ENCODE measurements at regions of chrX and their contacts with region 1.

Region 1: DNA sequence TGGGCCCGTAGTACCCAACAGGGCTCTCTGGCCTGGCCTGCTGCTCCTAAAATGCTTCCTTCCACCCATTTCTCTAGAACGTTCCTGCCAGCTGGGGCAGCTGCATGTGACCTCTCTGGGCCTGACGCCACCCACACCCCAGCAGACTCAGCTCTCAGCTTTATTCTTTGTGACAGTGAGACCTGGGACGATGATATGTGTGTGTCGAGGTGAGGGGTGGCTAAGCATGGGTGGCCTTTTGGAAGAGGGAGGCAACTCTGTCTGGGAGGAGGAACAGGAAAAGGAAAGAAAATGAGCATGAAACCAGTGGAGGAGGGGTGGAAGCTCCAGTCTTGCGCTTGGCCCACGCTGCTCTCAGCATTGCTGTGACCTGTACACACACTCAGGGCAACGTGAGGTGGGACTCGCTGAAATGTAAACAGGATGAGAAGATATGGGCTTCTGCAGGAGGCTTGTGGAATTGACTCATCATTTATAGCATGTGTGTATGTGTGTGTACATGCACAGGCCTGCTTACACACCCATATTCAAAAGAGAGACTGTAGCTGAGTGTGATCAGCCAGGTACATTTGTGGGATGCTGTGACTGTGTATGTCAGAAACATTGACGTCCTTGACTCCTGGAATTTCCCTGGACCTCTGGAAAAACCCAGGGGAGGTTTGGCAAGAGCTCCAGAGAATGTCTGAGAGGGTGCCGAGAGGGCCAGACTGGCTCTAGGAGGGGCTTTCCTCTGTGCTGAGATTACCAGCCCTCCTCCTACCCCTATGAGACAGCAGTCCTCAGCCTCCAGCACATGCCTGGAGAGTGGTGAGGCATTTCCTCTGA is 137.9 kb downstream of the PJA1 start:
- DNase-seq: peak; percentile 91
- ATAC-seq: peak; percentile 58
- H3K4me3 ChIP-seq: no peak overlapping the region; the same call in 1 of the 2 replicates
- H3K27ac ChIP-seq: peak overlapping the region; percentile 98
- H3K4me1 ChIP-seq: peaks cover 64% of the 10 kb centered on the region
- H3K27me3 ChIP-seq: no peaks in the 10 kb centered on the region
- CTCF ChIP-seq: no peak

Region 2: GRCh38 chrX:68828740-68829552 is 198.4 kb before region 1 on chrX and contains the start of gene EFNB1:
- CTCF ChIA-PET with region 1: interaction called, 18 read pairs
- POLR2A ChIA-PET with region 1: interaction called, 62 read pairs
- intact Hi-C with region 1: loop called (anchors 1 kb)
- DNase-seq: peak; percentile 96
- ATAC-seq: peak; percentile 65
- H3K4me3 ChIP-seq: peak within 1 kb of the TSS; percentile 93
- H3K27ac ChIP-seq: peak within 1 kb of the TSS; percentile 87
- H3K4me1 ChIP-seq: peaks cover 32% of the 10 kb centered on the region
- H3K27me3 ChIP-seq: no peaks in the 10 kb centered on the region
- CTCF ChIP-seq: no peak
- total RNA-seq, gene EFNB1: 102 and 142 TPM in 2 replicates

Region 3: DNA sequence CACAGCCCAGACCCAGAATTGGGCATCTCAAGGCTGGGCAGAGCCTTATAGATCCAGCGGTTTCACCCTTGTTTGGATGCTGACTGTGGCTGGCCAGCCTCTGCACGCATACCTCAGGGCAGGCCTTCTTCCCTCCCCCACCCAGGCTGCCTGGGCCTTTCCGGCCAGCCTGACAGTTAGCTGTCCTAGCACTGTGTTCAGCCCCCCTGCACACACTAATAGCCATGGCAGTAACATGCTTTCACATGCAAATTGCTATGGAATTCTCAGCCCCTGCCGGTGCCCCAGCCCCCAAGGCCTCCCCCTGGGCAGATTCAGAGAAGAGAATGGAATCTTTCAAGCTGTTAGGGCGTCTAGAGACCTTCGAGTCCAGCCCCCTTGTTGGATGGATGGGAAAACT is 180.9 kb before region 1 on chrX:
- CTCF ChIA-PET with region 1: no interaction called
- POLR2A ChIA-PET with region 1: no interaction called
- intact Hi-C with region 1: loop called (anchors 5 kb)
- DNase-seq: no peak
- ATAC-seq: no peak
- H3K4me3 ChIP-seq: no peak overlapping the region
- H3K27ac ChIP-seq: no peak overlapping the region
- H3K4me1 ChIP-seq: peaks cover 15% of the 10 kb centered on the region; the same call in 1 of the 2 replicates
- H3K27me3 ChIP-seq: no peaks in the 10 kb centered on the region
- CTCF ChIP-seq: no peak

Region 4: GRCh38 chrX:68929332-68930150 is 97.9 kb before region 1 on chrX:
- CTCF ChIA-PET with region 1: no interaction called
- POLR2A ChIA-PET with region 1: no interaction called
- intact Hi-C with region 1: loop called (anchors 5 kb)
- DNase-seq: peak; percentile 89
- ATAC-seq: peak; percentile 92
- H3K4me3 ChIP-seq: no peak overlapping the region
- H3K27ac ChIP-seq: peak overlapping the region; percentile 55
- H3K4me1 ChIP-seq: peaks cover 27% of the 10 kb centered on the region
- H3K27me3 ChIP-seq: no peaks in the 10 kb centered on the region
- CTCF ChIP-seq: no peak

Region 5: GRCh38 chrX:68999356-68999755 is 28.0 kb before region 1 on chrX:
- CTCF ChIA-PET with region 1: no interaction called
- POLR2A ChIA-PET with region 1: no interaction called
- intact Hi-C with region 1: loop called (anchors 1 kb)
- DNase-seq: peak; percentile 92
- ATAC-seq: peak; percentile 96
- H3K4me3 ChIP-seq: no peak overlapping the region
- H3K27ac ChIP-seq: peak overlapping the region; percentile 93
- H3K4me1 ChIP-seq: peaks cover 34% of the 10 kb centered on the region
- H3K27me3 ChIP-seq: no peaks in the 10 kb centered on the region
- CTCF ChIP-seq: no peak

Region 6: GRCh38 chrX:69045616-69046345 is 18.4 kb after region 1 on chrX:
- CTCF ChIA-PET with region 1: no interaction called
- POLR2A ChIA-PET with region 1: no interaction called
- intact Hi-C with region 1: no loop called
- DNase-seq: no peak
- ATAC-seq: no peak
- H3K4me3 ChIP-seq: no peak overlapping the region
- H3K27ac ChIP-seq: no peak overlapping the region
- H3K4me1 ChIP-seq: no peaks in the 10 kb centered on the region
- H3K27me3 ChIP-seq: no peaks in the 10 kb centered on the region
- CTCF ChIP-seq: no peak

Region 7: DNA sequence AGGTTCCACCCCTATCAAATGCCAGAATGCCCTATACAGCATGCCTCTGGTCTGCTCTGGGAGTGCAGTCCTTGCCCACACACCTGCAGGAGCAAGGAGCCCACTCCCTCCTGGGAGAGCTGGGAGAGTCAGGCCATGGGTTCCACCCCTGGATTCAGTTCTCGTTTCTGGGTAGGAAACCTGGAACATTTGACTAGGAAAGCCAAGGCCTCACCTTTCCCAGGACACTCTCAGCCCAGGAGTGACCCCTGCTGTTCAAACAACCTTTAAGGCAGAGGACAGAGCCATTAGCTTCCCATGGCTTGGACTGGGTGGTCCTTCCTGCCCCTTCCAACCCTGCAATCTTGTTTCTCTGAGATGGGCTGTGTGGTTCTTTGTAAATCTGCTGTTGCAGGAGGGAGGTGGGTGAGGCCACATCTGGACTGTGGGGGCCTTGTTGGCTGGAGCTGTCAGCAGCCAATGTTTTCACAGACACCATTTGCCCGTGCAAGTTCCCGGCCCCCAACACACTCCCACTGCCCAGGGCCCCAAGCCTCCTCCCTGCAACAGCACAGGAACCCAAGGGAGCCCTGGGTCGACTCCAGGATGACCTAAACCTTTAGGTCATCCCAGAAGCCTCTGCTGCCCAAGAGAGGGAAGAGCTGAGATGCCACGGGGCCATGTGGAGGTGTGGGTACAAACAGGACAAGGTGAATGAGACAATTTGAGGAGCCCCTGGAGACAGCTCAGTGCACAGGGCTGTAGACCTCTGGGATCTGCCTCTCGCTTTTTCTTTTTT is 33.4 kb after region 1 on chrX:
- CTCF ChIA-PET with region 1: interaction called, 3 read pairs
- POLR2A ChIA-PET with region 1: no interaction called
- intact Hi-C with region 1: loop called (anchors 2 kb)
- DNase-seq: peak; percentile 61
- ATAC-seq: peak; percentile 86
- H3K4me3 ChIP-seq: no peak overlapping the region
- H3K27ac ChIP-seq: no peak overlapping the region
- H3K4me1 ChIP-seq: peaks cover 4% of the 10 kb centered on the region; the same call in 1 of the 2 replicates
- H3K27me3 ChIP-seq: no peaks in the 10 kb centered on the region
- CTCF ChIP-seq: peak; percentile 58

Region 8: GRCh38 chrX:69158166-69158980 is 131.0 kb after region 1 on chrX:
- CTCF ChIA-PET with region 1: no interaction called
- POLR2A ChIA-PET with region 1: no interaction called
- intact Hi-C with region 1: loop called (anchors 10 kb)
- DNase-seq: peak; percentile 73
- ATAC-seq: peak; percentile 81
- H3K4me3 ChIP-seq: no peak overlapping the region
- H3K27ac ChIP-seq: no peak overlapping the region
- H3K4me1 ChIP-seq: peaks cover 12% of the 10 kb centered on the region
- H3K27me3 ChIP-seq: no peaks in the 10 kb centered on the region
- CTCF ChIP-seq: peak; percentile 71